Panc1 (cell line): ENCODE measurements at regions of chr17 and their contacts with region 1.

Region 1: DNA sequence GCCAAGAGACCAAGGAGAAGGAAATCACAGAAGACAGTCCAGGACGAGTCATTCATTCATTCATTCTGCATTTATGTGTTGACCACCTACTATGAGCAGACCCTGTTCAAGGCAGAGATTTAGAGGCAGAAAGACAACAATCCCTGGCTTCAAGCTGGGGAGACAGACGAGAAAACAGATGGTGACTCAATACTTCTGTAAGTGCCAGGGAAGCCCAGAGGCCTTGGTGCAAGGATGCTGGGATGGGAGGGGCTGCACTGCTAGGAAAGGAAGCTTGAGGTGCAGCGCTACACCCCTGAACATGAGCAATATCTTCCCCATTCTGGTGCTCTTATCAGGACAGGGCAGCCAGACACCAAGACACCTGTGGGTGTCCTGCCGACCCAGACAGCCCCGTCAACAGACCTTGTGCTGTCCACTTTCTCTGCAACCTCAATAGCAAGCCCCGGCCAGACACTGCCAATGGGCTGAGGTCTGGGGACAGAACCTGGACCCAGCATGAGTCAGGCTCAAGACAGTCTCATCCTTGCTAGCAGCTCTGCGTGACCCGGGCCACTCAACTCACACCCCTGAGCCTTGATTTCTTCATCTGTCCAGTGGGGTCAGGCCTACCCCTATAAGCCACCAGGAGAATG is 163.5 kb downstream of the COPRS start:
- DNase-seq: no peak
- ATAC-seq: no peak; the same call in 1 of the 2 replicates
- H3K4me3 ChIP-seq: no peak overlapping the region
- H3K27ac ChIP-seq: peak overlapping the region; percentile 1; the same call in 1 of the 2 replicates
- H3K4me1 ChIP-seq: 0 out of 2 replicates have a peak, but pooled peaks cover 8% of the 10 kb centered on the region
- H3K27me3 ChIP-seq: no peaks in the 10 kb centered on the region
- CTCF ChIP-seq: no peak

Region 2: GRCh38 chr17:31564883-31565301 is 130.7 kb before region 1 on chr17:
- CTCF ChIA-PET with region 1: no interaction called
- POLR2A ChIA-PET with region 1: no interaction called
- in situ Hi-C with region 1: no loop called
- intact Hi-C with region 1: no loop called
- DNase-seq: no peak
- ATAC-seq: no peak
- H3K4me3 ChIP-seq: 0 out of 4 replicates have a peak overlapping the region, but pooled peaks of 1 of the 2 experiments have one; percentile 6
- H3K27ac ChIP-seq: peak overlapping the region; percentile 44
- H3K4me1 ChIP-seq: peaks cover 68% of the 10 kb centered on the region
- H3K27me3 ChIP-seq: no peaks in the 10 kb centered on the region
- CTCF ChIP-seq: no peak

Region 3: DNA sequence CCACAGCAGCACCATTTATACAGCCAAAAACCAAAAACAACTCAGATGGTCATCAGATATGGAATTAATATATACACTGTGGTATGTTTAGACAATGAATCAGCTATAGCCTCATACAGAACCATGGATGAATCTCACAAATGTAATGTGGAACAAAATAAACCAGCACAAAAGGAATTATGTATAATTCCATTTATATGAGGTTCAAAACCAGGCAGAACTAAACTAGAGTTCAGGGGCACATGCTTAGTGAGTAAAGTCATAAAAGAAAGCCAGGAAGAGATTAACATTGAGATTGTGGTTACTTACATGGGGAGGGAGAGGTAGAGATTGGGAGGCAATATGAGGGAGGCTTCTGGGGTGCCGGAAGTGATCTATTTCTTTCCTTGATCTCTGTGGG is 67.6 kb before region 1 on chr17:
- CTCF ChIA-PET with region 1: no interaction called
- POLR2A ChIA-PET with region 1: no interaction called
- in situ Hi-C with region 1: no loop called
- intact Hi-C with region 1: no loop called
- DNase-seq: no peak
- ATAC-seq: peak; percentile 95
- H3K4me3 ChIP-seq: no peak overlapping the region
- H3K27ac ChIP-seq: no peak overlapping the region
- H3K4me1 ChIP-seq: no peaks in the 10 kb centered on the region; the same call in 1 of the 2 replicates
- H3K27me3 ChIP-seq: no peaks in the 10 kb centered on the region
- CTCF ChIP-seq: no peak

Region 4: DNA sequence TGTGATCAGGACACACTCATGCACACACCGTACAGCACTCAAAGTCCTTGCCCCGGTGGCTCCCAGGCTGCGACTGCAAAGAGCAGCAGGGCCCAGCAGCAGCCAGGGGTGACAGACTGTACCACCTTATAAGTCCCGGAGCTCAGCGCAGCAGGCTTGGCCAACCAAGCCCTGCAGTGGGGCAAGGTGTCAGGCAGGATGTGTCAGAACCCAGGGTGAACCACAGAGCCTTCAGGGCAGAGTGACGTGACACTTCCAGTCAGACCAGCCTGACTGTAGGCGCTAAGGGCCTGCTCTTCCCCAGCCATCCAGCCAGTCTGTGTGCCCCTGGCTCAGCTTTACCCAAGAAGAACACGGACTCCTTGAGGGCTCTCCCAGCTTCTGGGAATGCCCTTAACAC is 40.6 kb before region 1 on chr17:
- CTCF ChIA-PET with region 1: no interaction called
- POLR2A ChIA-PET with region 1: interaction called, 14 read pairs
- in situ Hi-C with region 1: no loop called
- intact Hi-C with region 1: no loop called
- DNase-seq: no peak
- ATAC-seq: peak; percentile 89
- H3K4me3 ChIP-seq: no peak overlapping the region
- H3K27ac ChIP-seq: no peak overlapping the region
- H3K4me1 ChIP-seq: no peaks in the 10 kb centered on the region
- H3K27me3 ChIP-seq: no peaks in the 10 kb centered on the region
- CTCF ChIP-seq: no peak